WTC11 (cell line): ENCODE measurements at regions of chr9 and their contacts with region 1.

Region 1: DNA sequence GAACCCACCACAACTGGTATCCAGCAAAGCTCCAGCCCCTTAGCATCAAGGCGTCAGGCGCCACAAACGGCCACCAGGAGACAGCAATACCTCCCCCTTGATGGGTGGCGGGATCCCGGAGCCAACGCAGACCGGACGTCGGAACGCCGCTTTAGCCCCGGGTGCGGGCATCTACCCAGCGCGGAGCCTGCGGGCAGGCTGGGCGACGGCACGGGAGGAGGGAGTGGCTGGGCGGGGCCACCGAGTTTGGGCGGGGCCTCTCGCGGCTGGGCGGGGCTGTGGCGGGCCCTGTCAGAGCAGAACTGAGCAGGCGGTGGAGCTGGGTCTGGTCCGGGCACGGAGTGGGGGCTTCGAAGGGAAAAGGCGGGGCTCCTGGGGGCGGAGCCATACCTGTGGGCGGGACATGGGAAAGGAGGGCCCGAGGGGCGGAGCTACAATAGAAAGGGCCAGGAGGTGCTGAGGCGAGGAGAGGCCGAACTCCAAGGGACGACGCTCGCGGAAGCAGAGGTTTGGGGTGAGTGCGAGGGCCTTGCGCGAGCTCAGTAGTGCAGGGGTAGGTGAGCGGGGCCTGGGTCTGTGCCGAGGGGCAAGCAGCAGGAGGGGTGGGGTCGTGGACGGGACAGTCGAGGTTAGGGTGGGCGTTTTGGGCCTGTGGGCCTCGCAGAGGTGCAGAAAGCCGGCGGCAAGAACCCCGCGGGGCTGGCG is 40.2 kb upstream of the GARNL3 start:
- DNase-seq: peak; percentile 99
- ATAC-seq: peak; percentile 89
- H3K4me3 Mint-ChIP-seq: peak overlapping the region; percentile 80
- H3K27ac Mint-ChIP-seq: peak overlapping the region; percentile 95
- H3K4me1 Mint-ChIP-seq: peaks cover 20% of the 10 kb centered on the region
- H3K27me3 Mint-ChIP-seq: peaks cover 36% of the 10 kb centered on the region
- CTCF ChIP-seq: no peak

Region 2: DNA sequence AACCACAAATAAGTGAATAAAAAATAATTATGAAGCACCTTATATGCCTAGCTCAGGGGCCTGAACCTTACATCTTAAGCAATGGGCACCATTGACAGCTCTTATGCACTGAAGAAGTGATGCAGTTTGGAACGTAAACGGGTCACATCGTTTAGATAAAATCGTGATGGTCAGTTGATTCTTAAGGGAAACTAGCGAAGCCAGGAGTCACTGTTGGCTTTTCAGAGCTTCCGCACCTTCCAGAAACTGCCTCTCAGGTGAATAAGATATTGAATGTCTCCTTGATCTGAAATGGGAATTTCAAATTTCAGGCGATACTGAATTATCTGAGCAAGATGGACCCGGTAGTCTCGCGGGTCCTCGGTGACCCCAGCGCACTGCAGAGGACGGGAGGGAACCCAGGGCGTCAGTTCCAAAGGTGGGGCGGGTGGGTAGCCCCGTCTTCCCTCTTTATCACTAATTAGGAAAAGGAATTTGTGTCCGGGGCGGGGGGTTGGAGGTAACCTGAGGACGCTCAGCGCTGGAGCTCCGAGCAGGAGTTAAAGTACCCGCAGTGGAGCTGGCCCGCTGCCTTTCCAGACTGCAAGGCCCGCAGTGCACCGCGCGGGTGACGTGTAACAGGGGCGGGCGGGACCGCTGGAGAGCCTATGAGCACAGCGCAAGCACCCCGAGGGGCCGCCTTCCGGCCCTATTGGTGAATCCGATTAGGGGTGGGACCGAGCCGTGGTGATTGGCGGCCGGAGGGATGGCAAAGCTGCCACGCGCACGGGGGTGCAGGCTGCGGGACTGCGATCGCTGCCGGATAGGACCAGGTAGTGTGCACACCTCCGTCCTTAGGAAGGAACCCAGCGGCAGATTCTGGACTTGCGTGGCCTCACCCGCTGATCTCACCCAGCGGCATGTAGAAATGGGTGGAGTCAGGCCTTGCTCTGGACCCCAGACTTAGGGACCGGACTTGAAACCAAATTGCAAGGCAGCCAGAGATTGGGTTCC is 20.6 kb after region 1 on chr9:
- CTCF ChIA-PET with region 1: interaction called, 21 read pairs
- POLR2A ChIA-PET with region 1: interaction called, 15 read pairs
- DNase-seq: peak; percentile 99
- ATAC-seq: peak; percentile 99
- H3K4me3 Mint-ChIP-seq: peak overlapping the region; percentile 87
- H3K27ac Mint-ChIP-seq: peak overlapping the region; percentile 96
- H3K4me1 Mint-ChIP-seq: peaks cover 52% of the 10 kb centered on the region
- H3K27me3 Mint-ChIP-seq: no peaks in the 10 kb centered on the region
- CTCF ChIP-seq: no peak

Region 3: GRCh38 chr9:127360829-127361228 is 136.5 kb after region 1 on chr9:
- CTCF ChIA-PET with region 1: interaction called, 13 read pairs
- POLR2A ChIA-PET with region 1: no interaction called
- DNase-seq: peak; percentile 65
- ATAC-seq: peak; percentile 97
- H3K4me3 Mint-ChIP-seq: no peak overlapping the region
- H3K27ac Mint-ChIP-seq: no peak overlapping the region; the same call in 1 of the 2 replicates
- H3K4me1 Mint-ChIP-seq: no peaks in the 10 kb centered on the region
- H3K27me3 Mint-ChIP-seq: no peaks in the 10 kb centered on the region
- CTCF ChIP-seq: no peak

Region 4: DNA sequence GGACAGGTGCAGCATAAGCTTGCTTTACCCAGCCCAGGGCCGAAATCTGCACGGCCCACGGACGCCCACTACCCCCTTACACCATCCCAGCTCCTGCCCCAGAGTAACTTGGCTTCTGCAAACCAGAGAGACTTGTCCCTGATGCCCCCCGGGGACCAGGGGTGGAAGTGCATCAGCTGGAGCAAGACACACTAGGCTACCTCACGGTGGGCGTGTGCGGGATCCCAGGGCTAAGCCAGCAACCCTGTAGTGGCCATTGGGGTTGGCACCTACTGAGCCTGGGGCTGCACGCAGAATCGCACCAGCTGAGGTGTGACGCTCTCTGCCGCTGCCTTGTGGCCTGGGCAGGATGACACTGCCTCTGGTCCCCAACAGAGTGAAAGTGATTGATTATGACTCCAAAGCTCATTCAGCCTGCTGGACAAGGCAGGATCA is 193.7 kb after region 1 on chr9:
- CTCF ChIA-PET with region 1: interaction called, 12 read pairs
- POLR2A ChIA-PET with region 1: interaction called, 5 read pairs
- DNase-seq: peak; percentile 82
- ATAC-seq: peak; percentile 95
- H3K4me3 Mint-ChIP-seq: no peak overlapping the region
- H3K27ac Mint-ChIP-seq: 0 out of 2 replicates have a peak overlapping the region, but pooled peaks have one; percentile 14
- H3K4me1 Mint-ChIP-seq: peaks cover 27% of the 10 kb centered on the region
- H3K27me3 Mint-ChIP-seq: peaks cover 3% of the 10 kb centered on the region; the same call in 1 of the 2 replicates
- CTCF ChIP-seq: no peak